B cell (primary cell): ENCODE measurements at regions of chr3 and their contacts with region 1.

Region 1: GRCh38 chr3:33074217-33075067 is 22.5 kb downstream of the GLB1 start:
- DNase-seq: peak; percentile 79
- ATAC-seq: peak; percentile 69
- H3K4me3 ChIP-seq: no peak overlapping the region
- H3K4me3 Mint-ChIP-seq: no peak overlapping the region
- H3K27ac ChIP-seq: no peak overlapping the region
- H3K27ac Mint-ChIP-seq: no peak overlapping the region
- H3K4me1 ChIP-seq: peaks cover 3 to 7% of the 10 kb centered on the region in 2 donors
- H3K4me1 Mint-ChIP-seq: peaks cover 26% of the 10 kb centered on the region
- H3K27me3 ChIP-seq: no peaks in the 10 kb centered on the region
- H3K27me3 Mint-ChIP-seq: no peaks in the 10 kb centered on the region
- CTCF ChIP-seq: peak; percentile 85

Region 2: GRCh38 chr3:32510075-32510724 is 564.2 kb before region 1 on chr3:
- CTCF ChIA-PET with region 1: interaction called, 6 read pairs
- POLR2A ChIA-PET with region 1: no interaction called
- intact Hi-C with region 1: loop called (anchors 10 kb)
- DNase-seq: peak; percentile 81
- ATAC-seq: peak; percentile 99
- H3K4me3 ChIP-seq: no peak overlapping the region
- H3K4me3 Mint-ChIP-seq: no peak overlapping the region
- H3K27ac ChIP-seq: no peak overlapping the region
- H3K27ac Mint-ChIP-seq: peak overlapping the region; percentile 27
- H3K4me1 ChIP-seq: no peaks in the 10 kb centered on the region
- H3K4me1 Mint-ChIP-seq: peaks cover 5% of the 10 kb centered on the region
- H3K27me3 ChIP-seq: no peaks in the 10 kb centered on the region
- H3K27me3 Mint-ChIP-seq: no peaks in the 10 kb centered on the region
- CTCF ChIP-seq: peak; percentile 92

Region 3: GRCh38 chr3:33047842-33048834 is 26.3 kb before region 1 on chr3:
- CTCF ChIA-PET with region 1: interaction called, 12 read pairs
- POLR2A ChIA-PET with region 1: no interaction called
- intact Hi-C with region 1: no loop called
- DNase-seq: peak; percentile 55
- ATAC-seq: peak; percentile 75
- H3K4me3 ChIP-seq: peak overlapping the region in 1 of 5 experiments; percentile 23
- H3K4me3 Mint-ChIP-seq: peak overlapping the region; percentile 82
- H3K27ac ChIP-seq: peak overlapping the region in 1 of 2 donors; percentile 32
- H3K27ac Mint-ChIP-seq: peak overlapping the region; percentile 96
- H3K4me1 ChIP-seq: peaks cover 47 to 82% of the 10 kb centered on the region in 2 donors
- H3K4me1 Mint-ChIP-seq: peaks cover 78% of the 10 kb centered on the region
- H3K27me3 ChIP-seq: no peaks in the 10 kb centered on the region
- H3K27me3 Mint-ChIP-seq: no peaks in the 10 kb centered on the region
- CTCF ChIP-seq: no peak

Region 4: GRCh38 chr3:33089515-33089914 is 15.1 kb after region 1 on chr3:
- CTCF ChIA-PET with region 1: interaction called, 21 read pairs
- POLR2A ChIA-PET with region 1: no interaction called
- intact Hi-C with region 1: no loop called
- DNase-seq: peak; percentile 72
- ATAC-seq: peak; percentile 84
- H3K4me3 ChIP-seq: peak overlapping the region in 2 of 5 experiments; percentile 3 to 46
- H3K4me3 Mint-ChIP-seq: peak overlapping the region; percentile 49
- H3K27ac ChIP-seq: peak overlapping the region; percentile 48 to 70
- H3K27ac Mint-ChIP-seq: peak overlapping the region; percentile 64
- H3K4me1 ChIP-seq: peaks cover 21 to 31% of the 10 kb centered on the region in 2 donors
- H3K4me1 Mint-ChIP-seq: peaks cover 67% of the 10 kb centered on the region
- H3K27me3 ChIP-seq: no peaks in the 10 kb centered on the region
- H3K27me3 Mint-ChIP-seq: no peaks in the 10 kb centered on the region
- CTCF ChIP-seq: no peak

Region 5: GRCh38 chr3:33229066-33229465 is 154.6 kb after region 1 on chr3:
- CTCF ChIA-PET with region 1: no interaction called
- POLR2A ChIA-PET with region 1: no interaction called
- intact Hi-C with region 1: no loop called
- DNase-seq: no peak
- ATAC-seq: no peak
- H3K4me3 ChIP-seq: no peak overlapping the region
- H3K4me3 Mint-ChIP-seq: no peak overlapping the region
- H3K27ac ChIP-seq: no peak overlapping the region
- H3K27ac Mint-ChIP-seq: no peak overlapping the region
- H3K4me1 ChIP-seq: no peaks in the 10 kb centered on the region
- H3K4me1 Mint-ChIP-seq: peaks cover 3% of the 10 kb centered on the region
- H3K27me3 ChIP-seq: peaks cover 0 to 4% (median 0%) of the 10 kb centered on the region in 4 experiments
- H3K27me3 Mint-ChIP-seq: peaks cover 16% of the 10 kb centered on the region
- CTCF ChIP-seq: no peak

Region 6: DNA sequence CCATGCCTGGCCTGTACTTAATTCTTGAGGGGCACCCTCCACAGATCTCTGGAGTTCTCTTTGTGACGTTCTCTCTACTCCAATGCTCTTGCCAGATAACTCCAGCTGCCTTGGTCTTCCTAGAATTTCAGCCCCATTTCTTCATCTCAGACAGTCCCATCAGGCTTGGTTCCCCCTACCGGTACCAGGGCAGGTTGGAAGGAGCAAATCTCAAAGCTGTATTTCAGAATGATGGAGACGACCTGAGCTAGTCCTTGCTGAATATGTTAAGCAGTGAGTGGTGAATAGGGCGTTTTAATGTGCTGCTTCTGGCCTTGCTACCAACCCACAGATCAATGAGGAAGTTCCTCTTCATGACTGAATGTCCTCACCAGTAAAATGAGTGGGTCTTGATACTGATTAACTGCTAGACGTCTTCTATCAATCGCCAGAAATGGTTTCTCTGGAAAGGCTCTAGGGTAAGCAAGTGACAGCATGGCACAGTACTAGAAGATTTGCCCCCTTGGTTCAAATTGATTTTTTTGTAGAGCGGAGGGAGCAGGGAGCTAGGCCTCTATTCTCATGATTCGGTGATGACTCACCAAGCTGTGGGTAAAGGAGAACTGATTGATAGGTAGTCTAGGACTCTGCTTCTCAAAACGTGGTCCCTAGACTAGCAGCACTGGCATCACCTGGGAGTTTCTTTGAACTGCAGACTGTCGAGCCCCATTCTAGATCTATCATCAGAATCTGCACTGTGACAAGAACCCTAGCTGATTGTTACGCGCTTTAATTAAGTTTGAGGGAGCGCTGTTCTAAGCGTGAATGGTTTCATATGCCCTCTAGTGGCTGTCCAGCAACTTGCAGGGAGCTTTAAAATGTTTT is 298.0 kb after region 1 on chr3:
- CTCF ChIA-PET with region 1: interaction called, 17 read pairs
- POLR2A ChIA-PET with region 1: no interaction called
- intact Hi-C with region 1: loop called (anchors 1 kb)
- DNase-seq: peak; percentile 68
- ATAC-seq: peak; percentile 49
- H3K4me3 ChIP-seq: no peak overlapping the region
- H3K4me3 Mint-ChIP-seq: no peak overlapping the region
- H3K27ac ChIP-seq: no peak overlapping the region
- H3K27ac Mint-ChIP-seq: no peak overlapping the region
- H3K4me1 ChIP-seq: peaks cover 4 to 6% of the 10 kb centered on the region in 2 donors
- H3K4me1 Mint-ChIP-seq: peaks cover 3% of the 10 kb centered on the region
- H3K27me3 ChIP-seq: peaks cover 0 to 5% (median 1%) of the 10 kb centered on the region in 4 experiments
- H3K27me3 Mint-ChIP-seq: peaks cover 20% of the 10 kb centered on the region
- CTCF ChIP-seq: peak; percentile 93